Right cardiac atrium (tissue), 5 donors: ENCODE measurements at regions of chr14 and their contacts with region 1.

Region 1: DNA sequence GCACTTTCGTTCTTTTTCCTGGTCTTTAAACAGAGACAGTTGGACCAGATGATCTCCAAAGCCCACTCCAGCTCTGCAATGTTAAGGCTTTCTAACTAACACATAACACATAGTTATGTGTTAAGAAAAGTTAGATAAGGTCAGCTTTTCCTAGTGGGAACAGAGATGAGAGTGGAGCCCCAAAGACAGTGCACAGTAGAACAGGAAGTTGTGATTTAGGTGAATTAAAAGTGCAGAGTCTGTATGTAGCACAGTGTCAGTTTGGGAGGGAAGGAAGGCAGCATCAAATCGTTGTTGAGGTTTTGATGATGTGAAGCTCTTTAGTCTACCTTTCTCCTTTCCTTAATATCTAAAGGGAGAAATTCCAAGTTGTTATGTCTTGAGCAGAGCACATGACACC is 31.7 kb downstream of the PRORP start:
- DNase-seq: no peak
- ATAC-seq: no peak
- H3K4me3 ChIP-seq: no peak overlapping the region
- H3K27ac ChIP-seq: no peak overlapping the region
- H3K4me1 ChIP-seq: peaks cover 4% of the 10 kb centered on the region
- H3K27me3 ChIP-seq: no peaks in the 10 kb centered on the region

Region 2: DNA sequence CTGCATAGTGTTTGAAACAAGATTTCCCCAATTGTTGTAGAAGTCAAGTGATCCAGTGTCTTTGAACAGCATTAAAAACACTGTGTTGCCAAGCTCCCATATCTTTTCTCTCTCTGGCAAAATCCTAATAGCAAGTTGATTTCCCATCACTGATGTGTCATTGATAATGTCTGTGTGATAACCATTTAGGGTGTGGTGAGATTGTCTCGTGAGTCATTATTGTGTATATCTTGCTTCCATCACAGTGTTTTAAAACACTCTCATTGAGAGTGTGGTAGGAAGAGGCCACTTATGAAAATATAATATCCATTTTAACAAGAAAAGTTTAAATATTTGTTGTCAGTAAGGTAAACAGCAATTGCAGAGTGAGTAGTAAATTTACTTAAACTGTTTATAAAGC is 43.0 kb after region 1 on chr14:
- intact Hi-C with region 1: no loop called
- DNase-seq: no peak
- ATAC-seq: peak in 1 of 2 donors; percentile 37
- H3K4me3 ChIP-seq: no peak overlapping the region
- H3K27ac ChIP-seq: no peak overlapping the region
- H3K4me1 ChIP-seq: no peaks in the 10 kb centered on the region
- H3K27me3 ChIP-seq: no peaks in the 10 kb centered on the region

Region 3: GRCh38 chr14:35430459-35431198 is 276.6 kb after region 1 on chr14:
- intact Hi-C with region 1: loop called in 1 of 4 experiments (anchors 5 kb)
- DNase-seq: no peak
- ATAC-seq: no peak
- H3K4me3 ChIP-seq: no peak overlapping the region
- H3K27ac ChIP-seq: no peak overlapping the region
- H3K4me1 ChIP-seq: no peaks in the 10 kb centered on the region
- H3K27me3 ChIP-seq: no peaks in the 10 kb centered on the region